ENCODE measurements at regions of chr2 and their contacts with region 1.

Region 1: DNA sequence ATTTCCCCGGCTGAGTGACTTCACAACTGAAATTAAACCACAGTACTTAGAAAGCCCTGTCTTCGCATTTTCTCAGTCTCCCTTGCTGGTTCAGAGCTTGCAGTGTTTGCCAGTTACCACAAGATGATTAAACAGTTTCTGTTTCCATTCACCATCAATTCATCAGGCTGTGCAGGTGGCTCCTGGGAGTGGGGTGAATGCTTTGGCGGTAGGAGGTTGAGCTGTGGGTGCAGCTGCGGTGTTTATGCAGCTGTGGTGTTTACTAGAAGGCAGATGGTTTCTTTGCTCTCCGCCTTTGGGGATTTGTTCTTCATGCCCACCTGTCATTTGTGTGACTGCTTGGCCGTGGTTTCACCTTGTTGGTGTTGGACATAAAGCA is 16.1 kb downstream of the ACOXL start:
- DNase-seq: peak; percentile 86
- ATAC-seq: peak; percentile 99
- H3K4me3 Mint-ChIP-seq: no peak overlapping the region
- H3K27ac Mint-ChIP-seq: no peak overlapping the region
- H3K4me1 Mint-ChIP-seq: peaks cover 18% of the 10 kb centered on the region
- H3K27me3 Mint-ChIP-seq: peaks cover 67% of the 10 kb centered on the region

Region 2: DNA sequence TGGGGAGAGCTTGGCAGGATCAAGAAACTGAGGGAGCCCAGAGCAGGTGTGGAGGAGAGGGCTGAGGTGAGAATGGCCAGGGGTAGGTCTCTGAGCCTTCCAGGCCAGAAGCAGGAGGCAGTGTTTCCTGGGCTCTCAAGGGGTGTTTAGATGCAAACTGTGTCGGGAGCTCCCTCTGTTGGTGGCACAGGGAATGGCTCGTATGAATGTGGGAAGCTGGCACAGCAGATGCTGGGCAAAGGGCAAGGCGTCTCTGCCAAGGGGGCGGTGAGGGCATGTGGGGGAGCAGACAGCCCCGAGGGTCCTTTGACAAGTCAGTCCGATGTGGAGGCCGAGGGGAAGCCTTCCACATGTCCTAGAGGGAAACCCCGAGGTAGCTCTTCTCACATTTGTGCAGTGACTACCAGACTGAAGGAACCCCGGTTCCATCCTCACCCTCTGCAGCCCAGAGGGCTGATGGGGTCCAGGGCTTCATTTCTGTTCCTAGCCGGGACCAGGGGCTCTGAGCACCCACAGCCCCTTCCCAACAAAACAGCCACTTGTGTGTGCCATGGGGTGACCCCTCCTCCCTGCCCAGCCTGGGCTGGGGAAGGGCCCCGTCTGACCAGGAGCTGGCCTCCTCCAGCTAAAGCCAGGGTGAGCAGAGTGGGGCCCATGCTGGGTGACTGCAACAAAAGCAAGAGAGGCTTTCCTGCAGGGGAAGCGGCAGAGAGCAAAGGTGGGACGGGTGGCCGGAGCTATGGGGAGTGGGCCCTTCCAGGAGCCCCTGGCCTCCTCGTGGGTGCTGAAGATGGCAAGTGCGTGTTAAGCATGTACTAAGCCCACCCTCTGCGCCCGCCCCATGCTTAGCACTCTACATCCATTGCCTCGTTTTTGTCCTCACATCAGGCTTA is 1238.1 kb before region 1 on chr2:
- CTCF ChIA-PET with region 1: no interaction called
- POLR2A ChIA-PET with region 1: no interaction called
- intact Hi-C with region 1: no loop called
- DNase-seq: peak; percentile 86
- ATAC-seq: peak; percentile 79
- H3K4me3 Mint-ChIP-seq: no peak overlapping the region
- H3K27ac Mint-ChIP-seq: no peak overlapping the region
- H3K4me1 Mint-ChIP-seq: no peaks in the 10 kb centered on the region
- H3K27me3 Mint-ChIP-seq: no peaks in the 10 kb centered on the region

Region 3: GRCh38 chr2:110157153-110157793 is 591.2 kb before region 1 on chr2:
- CTCF ChIA-PET with region 1: no interaction called
- POLR2A ChIA-PET with region 1: no interaction called
- intact Hi-C with region 1: loop called in 1 of 2 experiments (anchors 10 kb)
- DNase-seq: peak; percentile 44
- ATAC-seq: peak; percentile 83
- H3K4me3 Mint-ChIP-seq: no peak overlapping the region
- H3K27ac Mint-ChIP-seq: no peak overlapping the region
- H3K4me1 Mint-ChIP-seq: peaks cover 37% of the 10 kb centered on the region
- H3K27me3 Mint-ChIP-seq: peaks cover 2% of the 10 kb centered on the region

Region 4: GRCh38 chr2:110677530-110678456 is 70.7 kb before region 1 on chr2 and contains the start of gene BUB1:
- CTCF ChIA-PET with region 1: interaction called, 5 read pairs
- POLR2A ChIA-PET with region 1: no interaction called
- intact Hi-C with region 1: loop called (anchors 1 kb)
- DNase-seq: peak; percentile 98
- ATAC-seq: peak; percentile 99
- H3K4me3 Mint-ChIP-seq: peak within 1 kb of the TSS; percentile 96
- H3K27ac Mint-ChIP-seq: peak within 1 kb of the TSS; percentile 97
- H3K4me1 Mint-ChIP-seq: peaks cover 30% of the 10 kb centered on the region
- H3K27me3 Mint-ChIP-seq: peaks cover 4% of the 10 kb centered on the region
- total RNA-seq, gene BUB1: 93.5 to 115 TPM

Region 5: DNA sequence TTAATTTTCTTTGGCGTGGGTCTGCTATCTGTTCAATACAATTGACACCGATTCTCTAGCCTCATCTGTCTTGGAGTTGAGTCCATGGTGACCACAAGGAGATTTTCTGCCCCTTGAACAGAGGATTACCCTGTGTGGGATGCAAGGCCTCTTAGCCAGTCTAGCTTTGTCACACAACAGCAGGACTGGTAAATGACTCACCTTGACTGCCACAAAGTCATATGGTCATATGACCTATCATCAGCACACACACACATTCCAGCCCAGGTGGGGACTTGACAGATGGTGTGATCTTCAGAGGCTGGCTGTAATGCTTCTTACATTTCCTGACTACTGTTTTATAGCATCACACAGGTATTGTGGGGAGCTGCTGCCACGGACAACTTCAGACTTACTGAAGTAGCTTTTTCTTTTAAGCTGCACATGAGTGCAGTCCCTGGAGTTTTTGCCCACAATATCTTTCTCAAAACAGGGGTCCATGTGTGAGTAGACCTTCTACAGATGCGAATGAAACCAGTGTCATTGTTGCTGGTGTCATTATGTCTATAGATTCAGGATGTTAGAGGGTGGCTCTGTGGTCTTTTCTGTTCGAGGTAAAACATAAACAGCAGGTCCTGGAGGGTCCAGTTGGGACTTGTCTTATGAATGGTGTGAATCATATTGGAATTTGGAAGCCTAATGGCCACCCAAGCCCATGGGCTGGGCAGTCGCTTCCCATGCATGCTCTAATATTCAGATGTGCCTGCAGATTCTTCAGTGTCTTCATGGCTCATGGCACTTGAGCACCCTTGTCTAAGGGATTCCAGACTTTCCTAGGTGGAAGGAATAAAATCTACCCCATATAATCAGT is 34.7 kb before region 1 on chr2:
- CTCF ChIA-PET with region 1: no interaction called
- POLR2A ChIA-PET with region 1: no interaction called
- intact Hi-C with region 1: loop called in 1 of 2 experiments (anchors 5 kb)
- DNase-seq: peak; percentile 36
- ATAC-seq: peak; percentile 99
- H3K4me3 Mint-ChIP-seq: no peak overlapping the region
- H3K27ac Mint-ChIP-seq: no peak overlapping the region
- H3K4me1 Mint-ChIP-seq: no peaks in the 10 kb centered on the region
- H3K27me3 Mint-ChIP-seq: peaks cover 39% of the 10 kb centered on the region

Region 6: DNA sequence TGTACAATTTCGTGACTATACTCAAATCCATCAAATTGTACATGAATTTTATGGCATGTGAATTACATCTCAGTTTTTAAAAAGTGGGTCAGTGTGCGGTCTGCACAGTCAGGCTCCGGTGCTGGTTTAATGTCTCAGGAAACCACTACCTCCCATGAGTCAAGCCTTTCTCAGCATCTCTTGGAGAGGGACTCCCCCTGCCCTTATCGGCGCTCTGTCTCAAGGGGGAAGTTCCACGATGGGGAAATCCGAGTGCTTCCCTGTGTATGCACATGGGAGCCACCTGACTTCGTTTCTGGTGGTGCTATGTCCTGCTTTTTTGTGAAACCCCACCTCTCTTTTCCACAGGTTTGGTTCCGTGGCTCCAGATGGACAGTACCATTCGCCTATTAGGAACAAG is 56.4 kb after region 1 on chr2:
- CTCF ChIA-PET with region 1: no interaction called
- POLR2A ChIA-PET with region 1: no interaction called
- intact Hi-C with region 1: loop called (anchors 1 to 5 kb)
- DNase-seq: peak; percentile 80
- ATAC-seq: peak; percentile 99
- H3K4me3 Mint-ChIP-seq: no peak overlapping the region
- H3K27ac Mint-ChIP-seq: no peak overlapping the region
- H3K4me1 Mint-ChIP-seq: peaks cover 15% of the 10 kb centered on the region
- H3K27me3 Mint-ChIP-seq: peaks cover 57% of the 10 kb centered on the region

Region 7: DNA sequence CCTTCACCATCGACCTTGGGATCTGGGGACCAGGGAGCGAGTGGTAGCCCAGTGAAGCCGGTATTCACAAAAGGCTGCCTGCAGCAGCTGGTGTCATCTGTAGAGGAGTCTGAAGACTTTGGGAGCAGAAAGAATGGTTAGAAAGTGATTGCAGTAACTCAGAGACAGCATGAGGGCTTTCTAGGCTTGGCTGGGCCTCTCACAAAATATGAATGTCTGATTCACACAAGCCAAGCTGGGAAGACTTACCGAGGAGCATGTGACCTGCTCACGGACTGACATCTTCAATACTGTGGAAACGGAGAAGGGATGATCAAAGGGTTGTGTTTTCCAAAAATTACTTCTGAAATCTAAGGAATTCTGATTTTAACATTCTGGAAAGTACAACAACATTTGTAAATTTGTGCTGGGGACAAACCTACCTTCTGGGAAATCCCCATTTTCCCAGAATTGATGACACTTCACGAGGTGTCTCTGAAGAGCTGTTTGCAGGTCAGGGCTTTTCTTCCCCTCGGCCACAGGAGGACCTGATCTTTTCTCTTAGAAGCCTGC is 95.6 kb after region 1 on chr2:
- CTCF ChIA-PET with region 1: no interaction called
- POLR2A ChIA-PET with region 1: no interaction called
- intact Hi-C with region 1: loop called in 1 of 2 experiments (anchors 2 kb)
- DNase-seq: peak; percentile 35
- ATAC-seq: peak; percentile 27
- H3K4me3 Mint-ChIP-seq: no peak overlapping the region
- H3K27ac Mint-ChIP-seq: no peak overlapping the region
- H3K4me1 Mint-ChIP-seq: peaks cover 58% of the 10 kb centered on the region
- H3K27me3 Mint-ChIP-seq: peaks cover 33% of the 10 kb centered on the region

Region 8: GRCh38 chr2:111111101-111111755 is 362.8 kb after region 1 on chr2:
- CTCF ChIA-PET with region 1: no interaction called
- POLR2A ChIA-PET with region 1: no interaction called
- intact Hi-C with region 1: loop called (anchors 5 kb)
- DNase-seq: peak; percentile 34
- ATAC-seq: peak; percentile 25
- H3K4me3 Mint-ChIP-seq: no peak overlapping the region
- H3K27ac Mint-ChIP-seq: no peak overlapping the region
- H3K4me1 Mint-ChIP-seq: peaks cover 19% of the 10 kb centered on the region
- H3K27me3 Mint-ChIP-seq: peaks cover 51% of the 10 kb centered on the region